ENCODE measurements at regions of chr2 and their contacts with region 1.

Region 1: DNA sequence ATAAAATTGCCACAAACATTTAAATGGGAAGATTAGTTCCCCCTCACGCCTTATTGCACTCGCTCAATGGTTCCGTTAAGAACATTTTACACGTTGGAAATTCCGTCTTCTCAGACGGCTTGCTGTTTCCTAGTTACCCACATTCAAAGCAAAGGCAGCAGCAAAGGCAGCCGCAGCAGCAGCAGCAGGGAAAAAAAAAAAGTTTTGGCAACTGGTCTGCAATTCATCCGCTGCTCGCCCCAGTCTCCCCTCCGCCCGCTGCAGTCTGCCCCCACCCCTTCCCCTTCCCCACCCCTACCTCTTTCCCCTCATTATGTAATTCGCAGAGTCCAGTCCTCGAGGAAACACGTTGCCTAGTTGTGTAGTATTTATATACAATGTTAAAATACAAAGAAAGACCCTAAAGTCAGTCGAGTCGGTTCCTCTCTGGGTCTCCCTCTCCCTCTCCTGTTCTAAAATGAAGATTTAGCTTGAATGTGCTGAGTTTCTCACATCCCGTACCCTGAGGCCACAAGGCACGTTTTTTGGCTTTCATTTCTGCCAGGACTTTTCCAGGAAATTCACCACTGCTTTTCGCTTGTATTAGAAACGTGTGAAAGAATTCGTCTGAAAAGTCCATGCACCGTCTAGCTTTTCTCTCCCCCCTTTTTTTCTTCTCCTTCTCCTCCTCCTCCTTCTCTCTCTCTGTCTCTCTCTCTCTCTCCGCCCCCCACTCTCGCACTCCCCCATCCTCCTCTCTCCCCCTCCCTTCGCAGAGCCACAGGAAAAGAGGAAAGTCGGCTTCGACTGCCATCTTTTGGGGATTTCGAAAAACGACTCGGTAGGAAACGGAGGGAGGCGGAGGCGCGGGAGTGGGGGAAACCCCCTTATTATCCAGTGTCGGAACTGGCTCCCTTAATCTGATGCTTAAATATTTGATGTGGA is 140.0 kb downstream of the MEIS1 start:
- DNase-seq: no peak
- H3K4me3 ChIP-seq: peak overlapping the region; percentile 60
- CTCF ChIP-seq: peak; percentile 71

Region 2: GRCh38 chr2:66414896-66415295 is 160.1 kb before region 1 on chr2:
- CTCF ChIA-PET with region 1: no interaction called
- POLR2A ChIA-PET with region 1: no interaction called
- DNase-seq: no peak
- H3K4me3 ChIP-seq: no peak overlapping the region
- CTCF ChIP-seq: no peak

Region 3: DNA sequence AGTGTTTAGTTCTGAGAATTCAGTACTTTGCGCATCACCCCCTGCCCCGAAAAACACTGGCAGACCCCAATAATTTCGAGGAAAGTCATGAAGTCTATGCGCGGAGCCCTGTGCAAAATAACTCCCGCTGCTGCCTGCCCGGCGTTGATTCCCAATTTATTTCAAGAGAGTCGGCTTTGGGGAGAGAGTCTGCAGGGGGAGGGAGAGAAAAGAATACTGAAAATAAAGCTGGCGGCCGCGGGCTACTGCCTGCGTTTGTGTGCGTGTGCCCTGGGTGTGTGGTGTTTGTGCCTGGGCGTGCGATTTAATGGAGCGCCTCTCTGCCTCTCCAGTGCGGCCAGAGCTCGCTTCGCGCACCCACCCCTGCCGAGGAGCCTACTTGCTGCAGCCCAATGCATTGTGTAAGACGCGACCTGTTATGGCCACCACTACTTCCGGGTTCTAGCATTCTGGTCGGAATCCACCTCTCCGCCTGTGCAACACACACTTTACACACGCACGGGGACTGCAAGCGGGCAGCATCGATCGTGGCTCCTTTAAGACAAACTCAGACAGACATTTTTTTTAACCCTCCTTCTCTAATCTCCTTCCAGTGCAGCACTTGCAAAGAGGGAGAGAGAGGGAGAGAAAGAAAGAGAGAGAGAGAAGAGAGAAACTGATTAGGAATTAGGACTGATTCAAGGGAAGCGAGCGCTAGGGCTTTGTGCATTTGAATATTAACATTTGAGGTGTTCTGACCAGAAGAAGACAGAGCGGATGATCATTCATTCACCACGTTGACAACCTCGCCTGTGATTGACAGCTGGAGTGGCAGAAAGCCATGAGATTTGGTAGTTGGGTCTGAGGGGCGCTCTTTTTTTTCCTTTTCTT is 140.0 kb before region 1 on chr2 and contains the start of gene MEIS1:
- CTCF ChIA-PET with region 1: interaction called, 62 read pairs
- POLR2A ChIA-PET with region 1: interaction called, 13 read pairs
- DNase-seq: peak; percentile 97
- H3K4me3 ChIP-seq: peak within 1 kb of the TSS; percentile 67
- CTCF ChIP-seq: no peak

Measured in AG04449 (cell line).